ENCODE measurements at regions of chr7 and their contacts with region 1.

Region 1: GRCh38 chr7:101138213-101138870 is 11.4 kb downstream of the SERPINE1 start:
- DNase-seq: peak; percentile 88
- H3K4me3 ChIP-seq: peak overlapping the region; percentile 3 to 4; a peak in 2 of 4 replicates
- H3K27ac ChIP-seq: peak overlapping the region; percentile 71 to 98
- H3K4me1 ChIP-seq: peaks cover 11 to 24% of the 10 kb centered on the region in 2 experiments; a peak in 3 of 4 replicates
- H3K27me3 ChIP-seq: no peaks in the 10 kb centered on the region
- CTCF ChIP-seq: peak; percentile 99
- EP300 ChIP-seq: peak; percentile 75 to 98
- RAD21 ChIP-seq: peak; percentile 63

Region 2: DNA sequence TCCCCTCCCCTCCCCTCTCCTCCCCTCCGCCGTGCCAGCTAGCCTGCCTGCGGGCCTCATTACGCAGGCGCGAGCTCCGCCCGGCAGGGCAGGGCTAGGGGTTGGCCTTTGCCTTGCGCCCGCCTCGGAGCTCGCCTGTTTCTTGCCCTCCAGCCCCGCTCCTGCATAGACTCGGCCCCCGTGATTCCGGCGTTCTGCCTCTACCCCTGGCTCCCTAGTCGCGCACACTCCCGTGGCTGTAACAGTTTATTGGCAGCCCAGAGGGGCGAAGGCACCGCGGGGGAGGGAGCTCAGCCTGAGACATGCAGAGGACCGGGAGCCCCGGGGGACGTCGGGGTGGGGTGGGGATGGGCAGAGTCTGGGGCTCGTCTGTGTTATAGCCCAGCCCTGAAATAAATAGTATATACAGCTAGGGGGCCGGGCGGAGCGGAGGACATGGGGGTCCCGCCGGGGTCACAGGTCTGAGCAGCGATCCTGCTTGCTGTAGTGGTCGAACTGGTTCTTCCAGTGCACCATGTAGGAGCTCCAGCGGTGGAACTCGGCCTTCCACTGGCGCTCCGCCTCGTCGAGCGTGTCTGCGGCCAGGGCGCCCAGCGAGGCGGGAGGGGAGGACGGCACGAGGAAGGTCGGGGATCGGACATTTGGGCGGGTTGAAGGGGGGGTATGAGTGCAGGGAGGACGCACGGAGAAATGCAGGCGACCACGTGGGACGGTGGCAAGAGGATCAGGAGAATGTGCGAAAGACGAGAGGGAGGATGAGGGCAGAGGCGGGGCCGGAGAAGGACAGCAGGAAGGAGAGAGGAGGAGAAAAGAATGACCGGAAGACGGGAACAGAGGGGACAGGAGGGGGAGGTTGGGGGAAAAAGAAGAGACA is 248.3 kb before region 1 on chr7:
- CTCF ChIA-PET with region 1: interaction called, 11 read pairs
- POLR2A ChIA-PET with region 1: no interaction called
- DNase-seq: peak; percentile 100
- H3K4me3 ChIP-seq: peak overlapping the region; percentile 71 to 78
- H3K27ac ChIP-seq: peak overlapping the region; percentile 82 to 97
- H3K4me1 ChIP-seq: peaks cover 7 to 40% of the 10 kb centered on the region in 2 experiments
- H3K27me3 ChIP-seq: 0 out of 2 replicates have a peak, but pooled peaks cover under 1% of the 10 kb centered on the region
- CTCF ChIP-seq: no peak
- EP300 ChIP-seq: no peak
- RAD21 ChIP-seq: no peak

Region 3: GRCh38 chr7:101017064-101017777 is 121.1 kb before region 1 on chr7:
- CTCF ChIA-PET with region 1: no interaction called
- POLR2A ChIA-PET with region 1: no interaction called
- DNase-seq: peak; percentile 82
- H3K4me3 ChIP-seq: 0 out of 4 replicates have a peak overlapping the region, but pooled peaks of 1 of the 2 experiments have one; percentile 1
- H3K27ac ChIP-seq: peak overlapping the region in 1 of 2 experiments; percentile 32; a peak in 1 of 4 replicates
- H3K4me1 ChIP-seq: peaks cover 4% of the 10 kb centered on the region in 2 experiments; a peak in 2 of 4 replicates
- H3K27me3 ChIP-seq: peaks cover 23% of the 10 kb centered on the region
- CTCF ChIP-seq: no peak
- EP300 ChIP-seq: no peak
- RAD21 ChIP-seq: no peak

Region 4: DNA sequence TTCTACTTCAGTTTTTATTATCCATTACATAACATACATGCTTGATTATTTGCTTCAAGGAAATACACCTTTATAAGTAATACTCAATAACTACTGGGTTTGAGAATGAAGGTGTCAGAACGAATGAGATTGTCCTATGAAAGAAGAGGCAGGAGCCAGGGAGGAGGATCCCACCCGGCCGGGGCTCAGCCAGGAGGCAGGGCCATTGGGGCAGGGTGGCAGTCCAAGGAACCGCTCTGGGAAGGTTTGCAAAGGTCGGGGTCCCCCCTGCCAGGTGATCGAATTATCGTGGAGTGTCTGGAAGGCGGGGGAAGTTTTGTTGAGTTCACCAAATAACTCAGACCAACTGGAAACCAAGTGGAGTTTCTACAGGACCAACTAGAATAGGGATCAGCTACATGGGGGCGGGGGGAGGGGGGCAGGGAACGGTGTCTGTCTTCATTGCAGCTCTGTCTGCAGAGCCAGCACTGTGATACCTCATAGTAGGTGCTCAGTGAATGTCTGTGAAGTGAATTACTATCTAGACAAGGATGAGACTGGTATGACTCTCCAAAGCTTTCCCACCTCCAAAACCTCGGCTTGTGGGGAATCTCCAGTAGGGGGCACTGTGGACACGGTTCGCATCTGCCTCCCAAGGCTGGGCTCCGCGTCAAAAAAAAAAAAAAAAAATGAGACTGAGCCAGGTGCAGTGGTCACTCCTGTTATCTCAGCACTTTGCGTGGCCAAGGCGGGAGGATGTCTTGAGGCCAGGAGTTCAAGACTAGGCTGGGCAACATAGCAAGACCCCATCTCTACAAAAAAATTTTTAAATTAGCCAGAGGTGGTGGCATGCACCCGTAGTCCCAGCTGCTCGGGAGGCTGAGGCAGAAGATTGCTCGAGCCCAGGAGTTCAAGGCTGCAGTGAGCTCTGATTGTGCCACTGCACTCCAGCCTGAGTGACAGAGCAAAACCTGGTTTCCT is 43.6 kb before region 1 on chr7:
- CTCF ChIA-PET with region 1: interaction called, 49 read pairs
- POLR2A ChIA-PET with region 1: no interaction called
- DNase-seq: peak; percentile 80
- H3K4me3 ChIP-seq: peak overlapping the region in 1 of 2 experiments; percentile 9; a peak in 1 of 4 replicates
- H3K27ac ChIP-seq: peak overlapping the region; percentile 18 to 93; a peak in 3 of 4 replicates
- H3K4me1 ChIP-seq: peaks cover 2 to 24% of the 10 kb centered on the region in 2 experiments; a peak in 3 of 4 replicates
- H3K27me3 ChIP-seq: no peaks in the 10 kb centered on the region
- CTCF ChIP-seq: peak; percentile 99
- EP300 ChIP-seq: no peak
- RAD21 ChIP-seq: peak; percentile 76

Region 5: GRCh38 chr7:101165075-101165957 is 27.0 kb after region 1 on chr7 and contains the start of gene VGF:
- CTCF ChIA-PET with region 1: interaction called, 45 read pairs
- POLR2A ChIA-PET with region 1: interaction called, 7 read pairs
- DNase-seq: peak; percentile 97
- H3K4me3 ChIP-seq: peak within 1 kb of the TSS; percentile 56 to 61
- H3K27ac ChIP-seq: peak within 1 kb of the TSS in 1 of 2 experiments; percentile 94; a peak in 3 of 4 replicates
- H3K4me1 ChIP-seq: peaks cover 36 to 66% of the 10 kb centered on the region in 2 experiments
- H3K27me3 ChIP-seq: no peaks in the 10 kb centered on the region
- CTCF ChIP-seq: no peak
- EP300 ChIP-seq: peak in 1 of 2 experiments; percentile 12; a peak in 1 of 4 replicates
- RAD21 ChIP-seq: no peak
- polyA plus RNA-seq, gene VGF: 17.4 and 54.3 TPM in 2 replicates

Region 6: GRCh38 chr7:101195884-101196283 is 57.5 kb after region 1 on chr7:
- CTCF ChIA-PET with region 1: interaction called, 257 read pairs
- POLR2A ChIA-PET with region 1: no interaction called
- DNase-seq: no peak
- H3K4me3 ChIP-seq: no peak overlapping the region
- H3K27ac ChIP-seq: no peak overlapping the region
- H3K4me1 ChIP-seq: no peaks in the 10 kb centered on the region
- H3K27me3 ChIP-seq: no peaks in the 10 kb centered on the region; the same call in 1 of the 2 replicates
- CTCF ChIP-seq: no peak
- EP300 ChIP-seq: no peak
- RAD21 ChIP-seq: no peak

Region 7: DNA sequence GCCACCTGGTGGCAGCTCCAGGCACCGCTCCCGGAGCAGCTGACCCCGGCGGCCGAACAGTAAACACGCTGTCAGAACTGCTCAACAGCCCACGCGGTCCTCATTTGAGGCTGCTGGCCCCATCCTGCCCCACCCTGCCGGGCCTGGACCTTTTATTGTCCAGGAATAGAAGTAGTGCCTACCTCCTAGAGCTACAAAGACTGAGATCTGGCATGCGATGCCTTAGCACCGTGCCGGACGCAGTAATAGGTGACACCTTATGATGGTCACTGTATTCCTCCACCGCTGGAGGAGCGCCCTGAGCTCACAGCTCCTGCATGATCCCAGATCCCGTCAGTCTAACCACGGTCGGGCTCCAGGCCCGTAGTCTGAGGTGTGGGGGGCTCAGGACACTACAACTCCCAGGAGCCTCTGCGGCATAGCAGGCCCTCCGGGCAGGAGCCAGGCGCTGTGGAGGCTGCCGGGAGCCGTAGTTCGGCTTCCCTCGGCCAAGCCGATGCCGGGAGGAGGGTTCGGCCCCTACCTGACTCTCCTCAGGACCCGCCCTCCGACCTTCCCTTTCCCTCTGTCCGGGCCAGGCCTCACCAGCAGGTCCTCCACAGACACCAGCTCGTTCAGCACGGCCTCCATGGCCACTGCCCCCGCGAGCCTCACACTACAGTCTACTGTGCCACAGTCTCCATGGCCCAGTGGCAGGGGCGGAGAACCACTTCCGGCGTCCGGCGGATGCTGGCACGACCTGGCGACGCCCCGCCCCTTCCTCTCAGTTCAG is 106.2 kb after region 1 on chr7 and contains the start of gene FIS1:
- CTCF ChIA-PET with region 1: interaction called, 66 read pairs
- POLR2A ChIA-PET with region 1: interaction called, 4 read pairs
- DNase-seq: peak; percentile 98
- H3K4me3 ChIP-seq: peak within 1 kb of the TSS; percentile 77 to 89
- H3K27ac ChIP-seq: peak within 1 kb of the TSS; percentile 80 to 93
- H3K4me1 ChIP-seq: peaks cover 7 to 14% of the 10 kb centered on the region in 2 experiments; a peak in 1 of 4 replicates
- H3K27me3 ChIP-seq: no peaks in the 10 kb centered on the region
- CTCF ChIP-seq: peak; percentile 98
- EP300 ChIP-seq: no peak
- RAD21 ChIP-seq: no peak; the same call in 1 of the 2 replicates
- polyA plus RNA-seq, gene FIS1: 1,071 and 1,313 TPM in 2 replicates

Region 8: DNA sequence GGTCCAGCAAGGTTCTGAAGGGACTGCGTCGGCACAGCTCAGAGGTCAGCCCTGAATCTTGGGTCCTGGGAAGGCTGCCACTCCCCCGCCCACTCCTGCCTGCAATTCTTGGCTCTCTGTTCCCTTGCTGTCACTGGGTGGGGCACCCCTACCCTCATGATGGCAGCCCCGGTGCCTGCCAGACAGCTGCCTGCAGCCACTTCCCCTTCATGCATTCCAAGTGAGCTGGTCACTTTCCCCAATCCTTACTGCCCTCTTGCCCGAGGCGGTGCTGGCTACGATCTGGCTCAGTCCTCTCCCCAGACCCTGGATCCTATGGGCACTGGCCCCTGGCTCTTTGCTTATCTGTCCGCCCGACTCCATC is 476.6 kb after region 1 on chr7:
- CTCF ChIA-PET with region 1: no interaction called
- POLR2A ChIA-PET with region 1: no interaction called
- DNase-seq: no peak
- H3K4me3 ChIP-seq: no peak overlapping the region
- H3K27ac ChIP-seq: no peak overlapping the region
- H3K4me1 ChIP-seq: peaks cover 6% of the 10 kb centered on the region in 2 experiments; a peak in 3 of 4 replicates
- H3K27me3 ChIP-seq: no peaks in the 10 kb centered on the region
- CTCF ChIP-seq: no peak
- EP300 ChIP-seq: no peak
- RAD21 ChIP-seq: no peak

Measured in SK-N-SH (cell line).